Thyroid gland (tissue), 4 donors: ENCODE measurements at regions of chr4 and their contacts with region 1.

Region 1: DNA sequence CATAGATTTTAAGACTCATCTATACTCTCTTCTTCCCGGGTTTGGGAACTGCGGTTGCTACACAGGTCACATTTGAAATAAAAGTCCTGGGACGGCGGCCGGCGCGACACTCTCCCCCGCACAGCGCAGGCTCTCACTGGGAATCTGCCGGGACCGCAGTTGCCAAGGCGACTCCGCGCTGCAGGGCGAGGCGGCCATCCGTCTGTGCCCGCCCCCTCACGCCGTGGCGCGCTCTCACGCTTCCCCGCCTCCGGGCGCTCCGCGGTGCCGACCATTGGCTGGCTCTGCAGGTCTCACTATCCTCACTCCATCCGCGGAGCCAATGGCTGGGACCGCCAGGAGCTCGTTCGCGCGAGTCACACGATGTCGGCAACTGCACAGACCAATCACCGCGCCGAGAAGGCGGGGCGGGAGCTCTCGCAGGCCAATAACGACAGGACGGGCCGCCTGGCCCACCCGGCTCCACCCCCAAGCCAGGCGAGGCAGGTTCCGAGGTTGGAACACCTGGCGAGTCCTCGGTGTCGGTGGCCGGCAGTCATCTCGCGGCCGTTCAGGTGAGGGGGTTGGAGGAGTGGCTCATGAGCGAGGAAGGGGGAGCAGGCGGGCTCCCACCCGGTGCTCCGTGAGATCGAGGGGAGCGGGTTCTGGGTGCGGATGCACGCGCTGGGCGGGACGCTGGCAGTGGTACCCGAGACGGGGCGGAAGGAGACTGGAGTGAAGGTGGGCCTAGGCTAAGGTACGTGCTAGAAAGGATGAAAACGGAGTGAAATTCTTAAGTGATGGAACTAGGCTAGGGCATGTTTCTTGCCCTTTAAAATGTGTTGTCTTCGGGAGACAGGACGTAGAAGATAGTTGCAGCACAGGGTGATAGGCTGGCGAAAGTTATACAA is at the start of gene MSMO1:
- DNase-seq: peak; percentile 100
- H3K4me3 ChIP-seq: peak within 1 kb of the TSS; percentile 54 to 88 (median 68)
- H3K27ac ChIP-seq: peak within 1 kb of the TSS; percentile 76 to 92 (median 85)
- H3K4me1 ChIP-seq: peaks cover 6 to 11% of the 10 kb centered on the region in 2 donors
- H3K27me3 ChIP-seq: no peaks in the 10 kb centered on the region
- CTCF ChIP-seq: no peak
- POLR2A ChIP-seq: peak in 1 of 2 donors; percentile 92
- total RNA-seq, gene MSMO1: 27.7 to 39.7 (median 32.7) TPM

Region 2: DNA sequence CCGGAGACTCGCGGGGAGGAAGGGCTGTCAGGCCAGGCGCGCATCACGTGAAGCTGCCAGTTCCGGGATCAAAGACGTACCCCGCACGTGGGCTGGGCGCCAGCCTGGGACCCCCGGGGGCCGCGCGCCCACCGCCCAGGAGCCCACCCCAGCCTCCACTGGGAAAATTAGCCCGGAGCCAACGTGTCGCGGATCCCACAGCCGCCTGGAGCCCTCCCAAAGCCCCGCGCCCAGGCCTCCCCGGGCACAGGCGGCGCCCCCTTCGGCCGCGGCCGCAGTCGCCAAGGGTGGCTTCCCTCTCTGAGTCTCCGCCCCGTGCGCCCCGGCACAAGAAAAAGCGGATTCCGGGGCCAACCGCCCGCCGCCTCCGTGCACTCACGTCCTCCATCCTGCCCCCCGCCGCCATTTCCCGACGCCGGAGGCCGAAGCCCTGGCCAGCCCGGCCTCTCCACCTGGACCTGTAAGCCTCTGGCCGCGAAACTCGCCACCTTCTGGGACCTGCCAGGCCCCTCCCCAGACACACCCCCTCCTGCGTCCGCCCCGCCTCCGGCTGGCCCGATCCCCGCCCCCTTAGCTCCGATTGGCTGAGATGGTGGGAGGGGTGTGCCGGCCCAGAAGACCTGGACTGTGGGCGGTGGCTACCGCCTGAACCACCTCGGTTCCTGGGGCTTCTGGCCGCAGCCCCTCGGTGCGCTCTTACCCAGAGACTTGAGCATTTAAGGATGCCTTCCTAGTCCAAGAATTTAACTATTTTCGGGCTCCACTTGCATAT is 214.9 kb before region 1 on chr4 and contains the start of gene TMEM192:
- intact Hi-C with region 1: loop called (anchors 5 kb)
- DNase-seq: peak; percentile 95
- H3K4me3 ChIP-seq: peak within 1 kb of the TSS; percentile 62 to 98 (median 97)
- H3K27ac ChIP-seq: peak within 1 kb of the TSS; percentile 85 to 93 (median 89)
- H3K4me1 ChIP-seq: peaks cover 8 to 14% of the 10 kb centered on the region in 2 donors
- H3K27me3 ChIP-seq: no peaks in the 10 kb centered on the region
- CTCF ChIP-seq: peak in 5 of 6 experiments; percentile 10 to 52 (median 30)
- POLR2A ChIP-seq: peak; percentile 14 to 91
- total RNA-seq, gene TMEM192: 19.2 to 34.9 (median 21.8) TPM

Region 3: GRCh38 chr4:165207431-165208220 is 119.8 kb before region 1 on chr4 and contains the start of gene KLHL2:
- intact Hi-C with region 1: loop called (anchors 10 kb)
- DNase-seq: peak; percentile 79 to 81
- H3K4me3 ChIP-seq: peak within 1 kb of the TSS; percentile 62 to 88 (median 83)
- H3K27ac ChIP-seq: peak within 1 kb of the TSS; percentile 58 to 77 (median 68)
- H3K4me1 ChIP-seq: peaks cover 18 to 35% of the 10 kb centered on the region in 2 donors
- H3K27me3 ChIP-seq: no peaks in the 10 kb centered on the region
- CTCF ChIP-seq: no peak
- POLR2A ChIP-seq: peak; percentile 71 to 92
- total RNA-seq, gene KLHL2: 30.9 to 45.2 (median 35.8) TPM